Gastrocnemius medialis (tissue), 4 donors: ENCODE measurements at regions of chr18 and their contacts with region 1.

Region 1: DNA sequence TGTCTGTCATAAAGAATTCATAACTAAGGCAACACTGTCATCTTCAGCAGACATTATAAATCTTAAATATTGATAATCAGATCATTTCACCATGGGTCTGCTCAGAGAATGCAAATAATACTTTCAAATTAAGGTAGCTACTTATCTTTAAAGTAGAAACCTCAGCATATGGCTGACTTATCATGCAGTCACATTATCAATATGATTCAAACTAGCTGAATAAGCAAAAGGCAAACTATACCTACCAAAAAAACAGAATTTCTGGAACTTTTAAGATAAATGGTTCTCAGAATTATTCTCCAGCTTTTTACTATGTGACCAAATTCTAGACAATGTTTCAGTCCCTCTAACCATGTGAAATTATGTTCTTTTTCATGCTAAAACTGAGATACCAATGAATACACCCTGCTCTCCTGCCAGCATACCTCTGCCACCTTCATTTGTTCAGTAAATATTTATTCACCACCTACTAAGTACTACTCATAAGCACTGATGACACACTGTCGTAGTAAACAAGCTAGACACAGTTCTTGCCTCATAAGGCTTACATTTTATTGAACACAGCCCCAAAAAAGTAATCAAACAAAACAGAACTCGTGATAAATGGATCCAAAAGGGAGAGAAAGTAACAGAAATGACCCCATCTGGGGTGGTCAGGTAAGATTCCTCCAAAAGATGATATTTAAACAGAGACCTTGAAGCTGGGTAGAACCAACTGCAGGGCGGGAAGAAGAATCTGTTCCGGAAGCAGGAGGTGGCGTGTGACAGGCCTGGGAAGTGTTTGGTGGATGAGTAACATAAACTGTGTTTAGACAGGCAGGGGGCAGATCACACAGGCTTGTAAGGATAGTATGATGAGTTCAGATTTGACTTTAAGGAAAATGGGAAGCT is 17.7 kb downstream of the SPIRE1 start:
- DNase-seq: peak; percentile 39 to 48
- ATAC-seq: peak; percentile 79 to 89
- H3K4me3 ChIP-seq: no peak overlapping the region
- H3K27ac ChIP-seq: peak overlapping the region in 3 of 4 donors; percentile 53 to 71 (median 54)
- H3K4me1 ChIP-seq: peaks cover 11 to 18% of the 10 kb centered on the region in 2 donors
- H3K27me3 ChIP-seq: no peaks in the 10 kb centered on the region
- CTCF ChIP-seq: no peak
- POLR2A ChIP-seq: no peak

Region 2: GRCh38 chr18:12531749-12532148 is 108.5 kb before region 1 on chr18:
- in situ Hi-C with region 1: loop called in 2 of 4 experiments (anchors 10 to 25 kb)
- intact Hi-C with region 1: no loop called
- DNase-seq: no peak
- ATAC-seq: peak; percentile 74 to 88
- H3K4me3 ChIP-seq: no peak overlapping the region
- H3K27ac ChIP-seq: no peak overlapping the region
- H3K4me1 ChIP-seq: peaks cover 9% of the 10 kb centered on the region in 2 donors
- H3K27me3 ChIP-seq: no peaks in the 10 kb centered on the region
- CTCF ChIP-seq: no peak
- POLR2A ChIP-seq: no peak